Psoas muscle (tissue), 8 donors: ENCODE measurements at regions of chr1 and their contacts with region 1.

Region 1: GRCh38 chr1:84693005-84693404 is 2.7 kb upstream of the SSX2IP start:
- DNase-seq: no peak
- ATAC-seq: no peak
- H3K4me3 ChIP-seq: no peak overlapping the region
- H3K27ac ChIP-seq: no peak overlapping the region
- H3K4me1 ChIP-seq: peaks cover under 1% of the 10 kb centered on the region
- H3K27me3 ChIP-seq: no peaks in the 10 kb centered on the region
- CTCF ChIP-seq: no peak

Region 2: DNA sequence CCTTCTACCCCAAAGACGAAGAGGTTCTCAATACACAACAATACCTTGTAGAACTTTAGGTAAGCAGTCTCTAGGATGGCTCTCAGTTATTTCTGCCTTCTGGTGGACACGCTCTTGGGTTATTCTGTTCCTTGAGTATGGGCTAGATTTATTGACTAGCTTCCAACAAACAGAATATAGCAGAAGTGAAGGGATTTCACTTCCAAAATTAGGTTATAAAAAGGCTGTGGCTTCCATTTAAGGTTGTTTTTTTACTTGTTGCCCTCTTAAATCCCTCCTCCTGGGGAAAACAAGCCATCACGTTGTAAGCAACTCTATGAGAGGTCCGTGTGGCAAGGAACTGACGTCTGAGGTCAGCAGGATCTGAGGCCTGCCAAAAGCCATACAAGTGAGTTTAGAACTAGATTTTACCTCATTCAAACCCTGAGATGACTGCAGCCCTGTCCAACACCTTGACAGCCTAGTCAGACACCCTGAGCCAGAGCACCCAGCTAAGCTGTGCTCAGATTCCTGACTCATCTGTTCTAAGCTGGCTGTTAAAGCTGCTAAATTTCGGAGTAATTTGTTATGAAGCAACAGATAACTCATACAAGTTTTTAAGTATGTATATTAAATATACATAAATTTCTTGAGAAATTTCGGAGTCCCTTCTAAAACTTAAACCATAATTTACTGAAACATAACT is 15.4 kb before region 1 on chr1:
- intact Hi-C with region 1: loop called in 1 of 2 experiments (anchors 1 kb)
- DNase-seq: no peak
- ATAC-seq: no peak
- H3K4me3 ChIP-seq: no peak overlapping the region
- H3K27ac ChIP-seq: no peak overlapping the region
- H3K4me1 ChIP-seq: no peaks in the 10 kb centered on the region
- H3K27me3 ChIP-seq: no peaks in the 10 kb centered on the region
- CTCF ChIP-seq: no peak